PC-9 (cell line): ENCODE measurements at regions of chr19 and their contacts with region 1.

Region 1: DNA sequence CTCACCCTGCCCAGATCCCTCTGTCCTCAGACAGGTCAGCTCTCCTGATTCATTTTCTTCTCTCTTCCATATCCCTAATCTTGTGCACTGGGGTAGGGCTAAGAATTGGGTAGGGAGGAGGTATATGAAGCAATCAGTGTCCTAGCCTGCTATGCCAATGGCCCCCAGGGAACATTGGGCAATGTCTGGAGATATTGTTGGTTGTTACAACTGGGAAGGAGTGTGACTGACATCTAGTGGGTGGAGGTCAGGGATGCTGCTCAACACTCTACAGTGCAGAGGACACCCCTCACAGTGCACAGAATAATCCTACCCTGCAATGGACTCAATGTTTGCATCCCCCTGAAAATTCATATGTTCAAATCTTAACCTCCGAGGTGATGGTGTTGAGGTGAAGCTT is 57.5 kb downstream of the CPAMD8 start:
- DNase-seq: peak in 1 of 2 experiments; percentile 50
- H3K4me3 ChIP-seq: no peak overlapping the region
- H3K27ac ChIP-seq: no peak overlapping the region
- H3K4me1 ChIP-seq: no peaks in the 10 kb centered on the region
- H3K27me3 ChIP-seq: no peaks in the 10 kb centered on the region
- CTCF ChIP-seq: peak; percentile 64

Region 2: GRCh38 chr19:16771618-16772017 is 197.5 kb before region 1 on chr19:
- CTCF ChIA-PET with region 1: no interaction called
- POLR2A ChIA-PET with region 1: no interaction called
- intact Hi-C with region 1: loop called (anchors 10 kb)
- DNase-seq: peak; percentile 68
- H3K4me3 ChIP-seq: no peak overlapping the region
- H3K27ac ChIP-seq: no peak overlapping the region
- H3K4me1 ChIP-seq: peaks cover 10% of the 10 kb centered on the region; the same call in 1 of the 2 replicates
- H3K27me3 ChIP-seq: no peaks in the 10 kb centered on the region
- CTCF ChIP-seq: peak; percentile 97